ENCODE measurements at regions of chr16 and their contacts with region 1.

Region 1: GRCh38 chr16:81629034-81629802 is 149.9 kb upstream of the PLCG2 start:
- DNase-seq: peak in 2 of 35 experiments; percentile 9 to 12
- ATAC-seq: no peak
- H3K4me3 ChIP-seq: no peak overlapping the region
- H3K4me3 Mint-ChIP-seq: no peak overlapping the region
- H3K27ac ChIP-seq: no peak overlapping the region
- H3K27ac Mint-ChIP-seq: peak overlapping the region in 1 of 2 donors; percentile 39
- H3K4me1 ChIP-seq: peaks cover 0 to 32% of the 10 kb centered on the region in 2 experiments
- H3K4me1 Mint-ChIP-seq: peaks cover 47 to 65% (median 55%) of the 10 kb centered on the region in 3 donors
- H3K27me3 ChIP-seq: no peaks in the 10 kb centered on the region
- H3K27me3 Mint-ChIP-seq: no peaks in the 10 kb centered on the region

Region 2: GRCh38 chr16:81600901-81601428 is 28.3 kb before region 1 on chr16:
- CTCF ChIA-PET with region 1: no interaction called
- POLR2A ChIA-PET with region 1: no interaction called
- DNase-seq: no peak
- ATAC-seq: no peak
- H3K4me3 ChIP-seq: no peak overlapping the region
- H3K4me3 Mint-ChIP-seq: no peak overlapping the region
- H3K27ac ChIP-seq: no peak overlapping the region
- H3K27ac Mint-ChIP-seq: no peak overlapping the region
- H3K4me1 ChIP-seq: peaks cover 0 to 2% of the 10 kb centered on the region in 2 experiments
- H3K4me1 Mint-ChIP-seq: peaks cover 19 to 22% (median 20%) of the 10 kb centered on the region in 3 donors
- H3K27me3 ChIP-seq: no peaks in the 10 kb centered on the region
- H3K27me3 Mint-ChIP-seq: no peaks in the 10 kb centered on the region

Region 3: GRCh38 chr16:81850197-81850944 is 221.2 kb after region 1 on chr16:
- CTCF ChIA-PET with region 1: interaction called in 1 of 2 experiments, 13 read pairs
- POLR2A ChIA-PET with region 1: no interaction called
- DNase-seq: no peak
- ATAC-seq: no peak
- H3K4me3 ChIP-seq: no peak overlapping the region
- H3K4me3 Mint-ChIP-seq: no peak overlapping the region
- H3K27ac ChIP-seq: no peak overlapping the region
- H3K27ac Mint-ChIP-seq: no peak overlapping the region
- H3K4me1 ChIP-seq: no peaks in the 10 kb centered on the region
- H3K4me1 Mint-ChIP-seq: peaks cover 0 to 4% (median 0%) of the 10 kb centered on the region in 3 donors
- H3K27me3 ChIP-seq: no peaks in the 10 kb centered on the region
- H3K27me3 Mint-ChIP-seq: peaks cover 0 to 6% of the 10 kb centered on the region in 2 donors